ENCODE measurements at regions of chr4 and their contacts with region 1.

Region 1: GRCh38 chr4:17810260-17811077 is at the starts of genes DCAF16 and NCAPG:
- DNase-seq: peak; percentile 93
- H3K4me3 ChIP-seq: peak within 1 kb of the TSS; percentile 87
- CTCF ChIP-seq: no peak

Region 2: GRCh38 chr4:17614416-17615299 is 195.8 kb before region 1 on chr4 and contains the start of gene MED28:
- CTCF ChIA-PET with region 1: interaction called, 10 read pairs
- POLR2A ChIA-PET with region 1: interaction called, 3 read pairs
- DNase-seq: peak; percentile 67
- H3K4me3 ChIP-seq: peak within 1 kb of the TSS; percentile 85
- CTCF ChIP-seq: no peak

Region 3: GRCh38 chr4:17695341-17695740 is 115.1 kb before region 1 on chr4:
- CTCF ChIA-PET with region 1: no interaction called
- POLR2A ChIA-PET with region 1: no interaction called
- DNase-seq: no peak
- H3K4me3 ChIP-seq: no peak overlapping the region
- CTCF ChIP-seq: no peak

Region 4: GRCh38 chr4:17797808-17798207 is 12.7 kb before region 1 on chr4:
- CTCF ChIA-PET with region 1: interaction called, 76 read pairs
- POLR2A ChIA-PET with region 1: interaction called, 3 read pairs
- DNase-seq: no peak
- H3K4me3 ChIP-seq: no peak overlapping the region
- CTCF ChIP-seq: no peak